HEK293 (cell line): ENCODE measurements at regions of chr7 and their contacts with region 1.

Region 1: DNA sequence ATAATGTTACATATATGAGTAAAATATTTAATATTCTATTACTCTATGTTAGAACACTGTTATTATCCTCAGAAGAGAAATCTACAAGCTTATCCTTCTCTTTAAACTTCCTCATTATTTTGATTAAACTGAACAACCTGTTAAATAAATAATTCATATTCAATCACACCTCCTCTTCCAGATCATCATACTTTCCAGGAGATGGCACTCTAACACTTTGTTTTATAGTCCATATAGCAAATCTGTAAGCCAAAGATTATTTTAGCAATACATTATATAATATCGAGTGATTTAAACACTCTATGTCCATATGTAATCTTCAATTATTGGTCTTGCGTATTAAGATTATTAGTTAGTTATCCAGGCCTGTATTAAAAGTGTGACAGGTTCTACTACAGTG is 694.1 kb downstream of the ANKRD7 start:
- H3K4me3 ChIP-seq: no peak overlapping the region
- H3K27ac ChIP-seq: no peak overlapping the region
- H3K4me1 ChIP-seq: no peaks in the 10 kb centered on the region
- CTCF ChIP-seq: no peak

Region 2: DNA sequence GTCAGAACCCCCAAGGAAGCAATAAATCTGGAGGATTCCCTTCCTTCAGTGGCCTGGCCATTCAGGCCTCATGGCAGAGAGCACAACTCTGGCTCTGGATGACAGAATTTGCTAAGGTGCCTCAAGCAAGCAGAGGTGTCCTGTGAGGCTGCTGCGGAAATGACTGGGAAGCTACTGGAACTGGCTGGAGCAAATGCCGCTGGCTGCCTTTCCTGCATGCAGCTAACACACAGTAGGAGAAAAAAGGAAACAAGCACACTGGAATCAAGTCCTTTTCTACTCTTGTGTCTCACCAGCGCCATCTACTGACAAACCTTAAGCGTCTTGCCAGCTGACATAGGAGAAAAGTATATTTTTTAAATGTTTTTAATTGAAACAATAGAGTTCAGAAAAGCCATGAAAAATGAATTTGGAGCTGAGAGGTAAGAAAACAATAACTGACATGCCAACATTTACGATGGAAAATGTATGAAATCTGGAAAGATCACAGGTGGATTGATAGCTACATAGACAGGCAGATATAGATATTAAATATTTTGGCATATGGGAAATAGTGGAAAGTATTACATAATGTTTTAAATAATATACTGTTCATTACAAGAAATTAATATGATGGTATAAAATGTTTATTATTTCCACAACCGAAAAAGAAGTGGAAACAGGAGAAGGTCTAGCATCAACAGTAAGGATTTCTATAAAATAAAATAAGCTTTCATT is 257.5 kb after region 1 on chr7:
- CTCF ChIA-PET with region 1: interaction called, 16 read pairs
- POLR2A ChIA-PET with region 1: no interaction called
- H3K4me3 ChIP-seq: no peak overlapping the region
- H3K27ac ChIP-seq: no peak overlapping the region
- H3K4me1 ChIP-seq: no peaks in the 10 kb centered on the region
- CTCF ChIP-seq: no peak